Right ventricle myocardium inferior (tissue), 1 donor: ENCODE measurements at regions of chr6 and their contacts with region 1.

Region 1: GRCh38 chr6:119978274-119978889 is 628.8 kb upstream of the MAN1A1 start:
- DNase-seq: no peak
- ATAC-seq: no peak

Region 2: GRCh38 chr6:119147101-119148053 is 831.0 kb before region 1 on chr6:
- intact Hi-C with region 1: loop called (anchors 10 kb)
- DNase-seq: no peak
- ATAC-seq: peak; percentile 61

Region 3: GRCh38 chr6:119742188-119742803 is 236.1 kb before region 1 on chr6:
- intact Hi-C with region 1: loop called (anchors 5 kb)
- DNase-seq: peak; percentile 68
- ATAC-seq: peak; percentile 52

Region 4: GRCh38 chr6:120354447-120355098 is 376.2 kb after region 1 on chr6:
- intact Hi-C with region 1: no loop called
- DNase-seq: no peak
- ATAC-seq: no peak